Gastrocnemius medialis (tissue), 4 donors: ENCODE measurements at regions of chr20 and their contacts with region 1.

Region 1: GRCh38 chr20:1894951-1895673 is at the start of gene SIRPA:
- DNase-seq: peak; percentile 37 to 50
- ATAC-seq: peak; percentile 77
- H3K4me3 ChIP-seq: peak within 1 kb of the TSS; percentile 65 to 94 (median 73)
- H3K27ac ChIP-seq: peak within 1 kb of the TSS; percentile 79 to 81 (median 80)
- H3K4me1 ChIP-seq: peaks cover 0 to 21% of the 10 kb centered on the region in 2 donors
- H3K27me3 ChIP-seq: no peaks in the 10 kb centered on the region
- CTCF ChIP-seq: no peak
- POLR2A ChIP-seq: peak; percentile 57 to 67
- total RNA-seq, gene SIRPA: 14.6 to 62.0 (median 20.6) TPM

Region 2: DNA sequence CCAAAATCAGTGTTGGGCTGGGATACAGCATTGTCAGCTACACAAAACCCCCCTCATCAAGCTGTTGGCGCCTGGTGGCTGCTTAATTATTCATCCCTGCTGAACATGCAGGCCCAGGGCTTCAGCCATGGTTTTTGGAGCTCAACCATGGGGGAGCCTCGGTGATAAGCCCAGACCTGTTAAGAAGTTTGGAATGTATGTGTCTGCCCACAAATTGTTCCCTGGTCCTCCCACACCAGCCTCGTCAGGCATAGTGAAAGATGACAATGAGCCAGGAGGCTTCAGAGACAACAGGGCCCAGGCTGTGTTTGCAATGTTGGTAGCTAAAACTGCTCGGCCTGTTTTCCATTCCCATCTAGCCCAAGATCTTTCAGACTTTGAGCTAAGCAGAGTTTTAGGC is 34.7 kb before region 1 on chr20:
- in situ Hi-C with region 1: no loop called
- intact Hi-C with region 1: no loop called
- DNase-seq: no peak
- ATAC-seq: no peak
- H3K4me3 ChIP-seq: no peak overlapping the region
- H3K27ac ChIP-seq: no peak overlapping the region
- H3K4me1 ChIP-seq: peaks cover 0 to 5% of the 10 kb centered on the region in 2 donors
- H3K27me3 ChIP-seq: no peaks in the 10 kb centered on the region
- CTCF ChIP-seq: no peak
- POLR2A ChIP-seq: no peak

Region 3: DNA sequence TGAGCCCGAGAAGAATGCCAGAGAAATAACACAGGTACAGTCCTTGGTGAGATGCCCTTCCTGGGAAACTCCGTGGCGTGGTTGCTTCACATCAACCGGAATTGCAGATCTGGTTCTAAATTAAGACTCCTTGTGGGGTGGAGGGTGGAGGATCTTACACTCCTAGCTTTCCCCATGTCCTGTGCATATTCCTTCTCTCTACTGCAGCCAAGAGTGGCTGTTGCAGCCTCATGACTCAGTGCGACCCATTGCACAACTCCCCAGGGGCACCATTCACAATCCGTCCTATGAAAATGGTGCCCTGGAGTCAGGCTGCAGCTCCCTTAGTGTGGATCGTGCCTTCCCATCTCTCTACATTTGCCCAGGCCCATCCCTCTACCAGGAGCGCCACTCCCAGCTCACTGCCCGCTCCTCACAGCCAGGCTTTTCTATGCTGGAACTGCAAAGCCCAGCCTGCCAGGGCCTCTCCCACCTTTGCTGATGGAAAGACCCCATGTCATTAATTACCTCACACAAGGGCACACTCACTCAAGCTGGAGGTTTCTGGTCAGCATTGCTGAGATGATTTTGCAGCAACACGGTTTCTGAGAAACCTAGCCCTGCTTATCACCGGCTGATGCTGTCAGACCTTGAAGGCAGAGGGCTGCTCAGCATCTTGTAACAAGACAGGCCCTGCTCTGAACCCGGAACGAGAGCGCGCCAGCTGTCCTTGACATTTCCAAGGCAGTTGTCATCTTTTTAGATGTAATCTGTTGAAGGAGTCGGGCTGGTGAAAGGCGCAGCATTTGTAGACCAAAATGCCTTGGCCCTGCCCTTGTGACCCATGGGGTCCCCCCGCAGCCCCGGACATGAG is 39.8 kb after region 1 on chr20:
- in situ Hi-C with region 1: no loop called
- intact Hi-C with region 1: loop called (anchors 2 kb)
- DNase-seq: peak; percentile 60 to 84
- ATAC-seq: peak; percentile 77 to 85
- H3K4me3 ChIP-seq: no peak overlapping the region
- H3K27ac ChIP-seq: peak overlapping the region; percentile 47 to 63 (median 60)
- H3K4me1 ChIP-seq: peaks cover 0 to 29% of the 10 kb centered on the region in 2 donors
- H3K27me3 ChIP-seq: no peaks in the 10 kb centered on the region
- CTCF ChIP-seq: no peak
- POLR2A ChIP-seq: no peak

Region 4: DNA sequence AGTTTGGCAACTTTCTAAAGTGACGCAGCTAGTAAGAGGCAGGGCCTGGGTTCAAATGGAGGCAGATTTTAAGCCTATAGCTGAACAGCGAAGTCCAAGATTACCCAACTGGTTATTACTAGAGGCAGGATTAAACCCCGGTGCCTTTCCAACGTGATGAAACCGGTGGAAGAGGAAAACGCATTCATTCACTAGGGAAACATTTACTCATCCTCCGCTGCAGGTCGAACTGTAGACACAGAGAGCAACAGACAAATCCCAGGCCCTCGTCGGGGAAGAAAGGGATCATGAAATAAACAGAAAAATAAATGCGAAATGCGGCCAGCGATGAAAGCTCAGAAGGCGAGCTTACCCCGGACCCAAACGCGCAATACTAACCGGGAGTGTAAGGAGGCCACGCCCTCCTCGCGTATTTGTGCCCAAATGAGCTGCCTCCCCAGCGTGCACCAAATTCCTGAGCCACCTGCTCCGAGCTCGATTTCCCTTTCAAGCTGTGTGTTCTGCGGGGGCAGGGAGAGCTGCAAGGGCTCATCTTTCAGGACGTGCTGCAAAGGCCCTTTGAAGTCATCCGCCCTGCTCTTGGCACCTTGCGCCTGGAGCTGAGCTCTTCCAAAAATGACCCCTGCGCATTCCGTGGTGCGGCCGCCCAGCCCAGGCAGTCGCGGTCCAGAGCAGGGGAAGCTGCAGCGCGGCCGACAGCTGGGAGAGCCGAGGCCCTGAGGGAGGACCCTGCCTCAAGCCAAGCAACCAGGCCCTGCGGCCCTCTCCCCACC is 51.8 kb after region 1 on chr20:
- in situ Hi-C with region 1: no loop called
- intact Hi-C with region 1: loop called (anchors 5 kb)
- DNase-seq: peak; percentile 56 to 80
- ATAC-seq: peak; percentile 67
- H3K4me3 ChIP-seq: peak overlapping the region; percentile 32 to 40 (median 37)
- H3K27ac ChIP-seq: peak overlapping the region; percentile 52 to 77 (median 68)
- H3K4me1 ChIP-seq: peaks cover 38 to 44% of the 10 kb centered on the region in 2 donors
- H3K27me3 ChIP-seq: no peaks in the 10 kb centered on the region
- CTCF ChIP-seq: no peak
- POLR2A ChIP-seq: peak in 1 of 2 donors; percentile 30

Region 5: DNA sequence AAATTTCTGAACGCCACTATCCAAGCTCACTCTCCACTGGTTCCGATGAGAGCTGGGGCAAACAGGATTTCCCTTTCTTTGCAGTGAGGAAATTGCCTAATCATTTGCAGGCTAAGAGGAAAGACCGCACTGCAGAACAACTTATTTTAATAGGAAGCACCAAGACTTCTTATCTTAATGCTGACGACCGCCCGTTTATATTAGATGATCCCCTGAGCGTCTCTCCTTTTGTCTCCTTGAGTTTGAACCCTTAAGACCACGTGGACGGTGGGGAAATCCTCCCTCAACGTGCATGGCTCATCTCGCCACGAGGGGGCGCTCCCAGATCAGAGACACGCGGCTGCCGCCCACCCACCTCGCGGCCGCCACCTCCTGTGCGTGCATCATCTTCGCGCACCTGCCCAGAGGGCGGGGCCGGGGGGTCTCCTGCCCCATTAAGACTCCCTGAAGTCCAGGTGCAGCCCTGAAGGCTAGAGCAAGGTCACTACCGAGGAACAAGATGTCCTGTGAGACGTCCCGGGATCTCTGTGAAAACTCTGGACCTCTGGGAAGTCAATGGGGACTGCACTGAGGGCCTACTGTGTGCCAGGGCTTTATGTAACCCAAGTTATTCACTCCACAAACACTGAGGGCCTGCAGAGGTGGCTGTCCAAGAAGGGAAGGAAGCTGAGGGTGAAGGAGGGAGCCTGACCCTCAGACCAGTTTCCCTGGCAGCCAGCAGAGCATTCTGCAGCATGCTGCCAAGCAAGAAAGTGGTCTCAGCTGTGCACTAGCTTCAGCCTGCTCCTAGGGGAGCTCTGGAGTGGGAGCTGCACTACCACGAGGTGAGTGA is 70.6 kb after region 1 on chr20:
- in situ Hi-C with region 1: no loop called
- intact Hi-C with region 1: loop called (anchors 5 kb)
- DNase-seq: peak in 1 of 2 donors; percentile 52
- ATAC-seq: peak; percentile 50 to 66
- H3K4me3 ChIP-seq: peak overlapping the region in 1 of 4 donors; percentile 1
- H3K27ac ChIP-seq: no peak overlapping the region
- H3K4me1 ChIP-seq: peaks cover 6% of the 10 kb centered on the region in 2 donors
- H3K27me3 ChIP-seq: no peaks in the 10 kb centered on the region
- CTCF ChIP-seq: peak; percentile 72 to 93 (median 91)
- POLR2A ChIP-seq: no peak